ENCODE measurements at regions of chr15 and their contacts with region 1.

Region 1: DNA sequence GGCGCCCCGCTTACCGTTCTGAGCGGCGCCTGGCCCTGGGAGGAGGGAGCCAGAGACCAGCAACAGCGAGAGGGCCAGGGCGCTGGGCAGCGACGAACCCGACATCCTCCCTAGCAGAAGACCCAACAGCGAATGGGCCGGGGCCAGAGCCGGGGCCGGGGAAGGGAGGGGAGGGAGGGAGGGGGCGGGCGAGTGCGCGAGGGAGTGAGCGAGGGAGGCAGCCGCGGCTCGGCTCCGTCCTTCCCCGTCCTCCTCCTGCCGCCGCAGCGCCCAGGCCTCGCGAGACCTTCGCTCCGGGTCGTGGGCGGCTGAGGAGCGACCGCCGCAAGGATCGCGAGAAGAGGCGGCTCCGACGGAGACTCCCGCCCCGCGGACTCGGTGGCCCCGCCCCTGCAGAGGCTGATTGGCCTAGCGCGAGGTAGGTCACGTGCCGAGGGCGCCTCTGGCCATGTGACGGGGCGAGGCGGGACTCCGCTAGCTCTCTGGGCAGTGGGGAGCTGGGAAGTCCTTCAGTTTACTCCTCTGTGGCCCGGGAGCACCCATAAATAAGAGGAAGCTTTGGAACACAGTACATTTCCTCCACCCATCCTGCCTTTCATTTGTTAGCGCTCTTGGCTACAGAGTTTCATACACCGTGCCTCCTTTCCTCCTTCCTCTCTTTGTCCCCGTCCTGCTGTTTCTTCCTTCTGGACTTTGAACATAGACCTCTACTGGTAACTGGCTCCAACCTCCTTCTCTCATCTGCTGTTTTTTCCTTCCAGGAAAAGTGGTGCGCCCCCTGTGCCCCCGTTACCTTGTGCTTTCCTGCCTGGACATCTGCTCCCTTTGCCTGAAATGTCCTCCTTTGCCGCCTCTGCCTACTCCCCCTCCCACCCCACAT is at the start of gene NPTN:
- DNase-seq: peak; percentile 98 to 99
- ATAC-seq: peak; percentile 93 to 98 (median 96)
- H3K4me3 ChIP-seq: peak within 1 kb of the TSS; percentile 88 to 98 (median 96)
- H3K27ac ChIP-seq: peak within 1 kb of the TSS; percentile 94 to 99 (median 98)
- H3K4me1 ChIP-seq: peaks cover 4 to 63% (median 50%) of the 10 kb centered on the region in 9 donors
- H3K27me3 ChIP-seq: peaks cover 0 to 8% (median 0%) of the 10 kb centered on the region in 7 donors
- CTCF ChIP-seq: peak in 5 of 9 donors; percentile 6 to 27 (median 14)
- total RNA-seq, gene NPTN: 167 to 212 (median 188) TPM

Region 2: DNA sequence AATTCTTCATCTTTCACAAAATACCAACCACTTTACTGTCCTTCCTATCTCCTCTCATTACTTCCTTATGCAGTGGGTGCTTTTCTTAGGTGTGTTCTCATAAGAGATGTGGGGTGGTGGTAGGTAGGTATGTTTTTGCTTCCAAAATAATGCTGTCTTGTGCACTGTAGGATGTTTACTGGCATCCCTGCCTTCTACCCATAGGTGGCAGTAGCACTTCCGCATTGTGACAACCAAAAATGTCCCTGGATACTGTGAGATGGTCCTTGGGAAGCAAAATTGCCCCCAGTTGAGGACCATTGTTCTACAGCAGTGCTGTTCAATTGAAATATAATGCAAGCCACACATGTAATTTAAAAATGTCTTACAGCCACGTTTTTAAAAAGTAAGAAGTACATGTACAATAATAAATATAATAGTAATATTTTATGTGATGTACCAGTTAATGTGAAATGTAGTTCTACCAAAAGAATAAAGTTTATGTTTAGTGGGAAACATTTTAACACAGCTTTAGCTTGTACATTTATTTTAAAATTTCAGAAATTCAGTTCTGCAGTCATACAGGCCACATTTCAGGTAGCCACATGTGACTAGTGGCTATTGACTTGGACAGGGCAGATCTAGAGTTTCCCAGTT is 505.9 kb before region 1 on chr15:
- intact Hi-C with region 1: no loop called
- DNase-seq: peak in 1 of 2 donors; percentile 5
- ATAC-seq: no peak
- H3K4me3 ChIP-seq: no peak overlapping the region
- H3K27ac ChIP-seq: no peak overlapping the region
- H3K4me1 ChIP-seq: no peaks in the 10 kb centered on the region
- H3K27me3 ChIP-seq: no peaks in the 10 kb centered on the region
- CTCF ChIP-seq: peak in 8 of 9 donors; percentile 21 to 80 (median 61)

Region 3: DNA sequence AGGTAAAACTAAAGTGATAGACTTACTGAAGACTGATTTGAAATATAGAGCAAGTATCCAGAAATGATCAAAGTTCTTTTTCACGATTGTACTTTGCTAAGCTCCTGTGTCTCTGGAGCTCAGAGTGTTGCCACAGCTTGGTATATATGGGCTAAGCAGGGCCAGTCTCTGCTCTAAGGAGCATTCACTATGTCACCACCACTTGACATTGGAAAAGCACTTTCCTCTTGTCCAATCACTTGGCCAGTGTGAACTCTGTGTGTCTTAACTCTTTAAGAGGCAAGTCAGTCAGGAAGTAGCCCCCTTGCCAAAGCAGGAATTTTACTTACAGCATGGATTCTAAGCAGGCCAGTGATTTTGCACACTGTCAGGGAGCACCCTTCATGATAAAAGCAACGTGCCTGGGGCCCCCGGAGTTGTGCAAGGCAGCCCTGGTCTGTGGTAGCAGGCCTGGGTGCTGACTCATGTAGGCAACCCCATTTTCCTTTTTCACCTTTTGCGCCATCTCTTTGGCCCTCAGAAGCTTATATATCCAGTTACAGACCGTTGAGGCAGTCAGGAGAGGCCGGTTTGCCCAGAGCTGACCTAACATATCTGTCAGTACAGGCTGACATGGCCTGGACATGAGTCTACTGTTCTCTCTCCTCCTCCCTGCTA is 337.6 kb before region 1 on chr15:
- intact Hi-C with region 1: loop called in 3 of 10 experiments (anchors 10 kb)
- DNase-seq: no peak
- ATAC-seq: peak in 1 of 8 donors; percentile 29
- H3K4me3 ChIP-seq: no peak overlapping the region
- H3K27ac ChIP-seq: peak overlapping the region in 1 of 10 donors; percentile 44
- H3K4me1 ChIP-seq: peaks cover 0 to 18% (median 0%) of the 10 kb centered on the region in 9 donors
- H3K27me3 ChIP-seq: no peaks in the 10 kb centered on the region
- CTCF ChIP-seq: no peak

Region 4: GRCh38 chr15:73560501-73561117 is 72.7 kb before region 1 on chr15:
- intact Hi-C with region 1: loop called (anchors 1 to 5 kb)
- DNase-seq: peak in 1 of 2 donors; percentile 36
- ATAC-seq: peak in 4 of 8 donors; percentile 46 to 54 (median 50)
- H3K4me3 ChIP-seq: no peak overlapping the region
- H3K27ac ChIP-seq: no peak overlapping the region
- H3K4me1 ChIP-seq: peaks cover 0 to 23% (median 11%) of the 10 kb centered on the region in 9 donors
- H3K27me3 ChIP-seq: no peaks in the 10 kb centered on the region
- CTCF ChIP-seq: peak; percentile 26 to 74 (median 55)

Region 5: GRCh38 chr15:73593304-73594074 is 39.9 kb before region 1 on chr15:
- intact Hi-C with region 1: loop called in 4 of 10 experiments (anchors 5 kb)
- DNase-seq: peak in 1 of 2 donors; percentile 71
- ATAC-seq: peak in 5 of 8 donors; percentile 29 to 60 (median 52)
- H3K4me3 ChIP-seq: no peak overlapping the region
- H3K27ac ChIP-seq: peak overlapping the region in 1 of 10 donors; percentile 8
- H3K4me1 ChIP-seq: peaks cover 13 to 67% (median 55%) of the 10 kb centered on the region in 9 donors
- H3K27me3 ChIP-seq: no peaks in the 10 kb centered on the region
- CTCF ChIP-seq: no peak

Measured in heart right ventricle (tissue), 16 donors.